Lower leg skin (tissue), 4 donors: ENCODE measurements at regions of chr1 and their contacts with region 1.

Region 1: DNA sequence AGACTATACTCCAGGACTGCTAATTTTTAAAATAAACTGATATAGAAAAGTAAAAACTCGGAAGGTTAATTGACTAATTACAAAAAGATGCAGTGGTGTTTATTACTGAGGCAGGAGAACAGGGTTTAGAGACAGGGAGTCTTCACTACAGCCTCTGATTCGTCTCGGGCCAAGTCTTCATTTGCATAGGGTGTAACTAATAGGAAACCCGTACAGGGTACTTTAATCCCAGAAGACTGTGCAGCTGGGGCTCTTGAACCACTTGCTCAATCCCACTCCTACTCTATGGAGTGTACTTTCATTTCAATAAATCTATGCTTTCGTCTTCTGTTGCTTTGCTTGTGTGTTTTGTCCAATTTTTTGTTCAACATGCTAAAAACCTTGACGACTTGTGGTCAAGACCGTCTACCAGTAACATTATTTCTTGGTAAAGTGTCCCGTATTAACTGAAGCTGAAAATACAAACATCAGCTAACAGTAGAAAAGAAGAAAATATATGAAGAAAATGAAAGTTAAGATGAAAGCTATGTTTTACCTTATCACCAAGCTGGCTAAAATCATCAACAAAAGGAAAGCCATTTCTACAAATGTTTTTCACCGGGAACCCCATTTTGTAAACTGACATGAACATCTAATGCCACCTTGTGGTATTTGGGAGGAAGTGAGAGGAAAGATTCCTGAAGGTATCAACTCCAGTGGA is 8.0 kb downstream of the SDHB start:
- DNase-seq: no peak
- H3K4me3 ChIP-seq: no peak overlapping the region
- CTCF ChIP-seq: peak in 1 of 3 donors; percentile 59
- POLR2A ChIP-seq: no peak

Region 2: DNA sequence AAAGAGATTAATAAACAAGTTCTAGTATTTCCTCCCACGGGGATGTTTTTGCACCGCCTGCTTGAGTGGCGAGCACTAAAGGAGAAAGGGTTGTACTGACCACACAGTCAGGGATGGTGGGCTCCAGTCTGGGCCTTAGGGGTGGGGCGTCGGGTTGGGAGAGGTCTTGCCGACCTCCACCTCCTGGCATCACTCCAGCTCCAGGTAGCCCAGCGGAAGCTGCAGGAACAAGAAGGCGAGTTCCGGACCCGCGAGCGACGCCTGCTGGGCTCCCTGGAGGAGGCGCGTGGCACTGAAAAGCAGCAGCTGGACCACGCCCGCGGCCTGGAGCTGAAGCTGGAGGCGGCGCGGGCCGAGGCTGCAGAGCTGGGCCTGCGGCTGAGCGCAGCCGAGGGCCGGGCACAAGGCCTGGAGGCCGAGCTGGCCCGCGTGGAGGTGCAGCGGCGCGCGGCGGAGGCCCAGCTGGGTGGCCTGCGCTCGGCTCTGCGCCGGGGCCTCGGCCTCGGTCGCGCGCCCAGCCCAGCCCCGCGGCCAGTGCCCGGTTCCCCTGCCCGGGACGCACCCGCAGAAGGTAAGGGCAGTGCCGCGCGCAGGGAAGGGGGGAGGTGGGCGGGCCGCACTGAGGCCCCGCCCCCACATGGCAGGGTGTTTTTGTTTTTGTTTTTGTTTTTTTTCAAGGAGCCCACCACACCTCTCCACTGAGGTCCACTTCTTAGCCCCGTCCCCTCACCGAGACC is 85.1 kb before region 1 on chr1:
- intact Hi-C with region 1: loop called (anchors 5 kb)
- DNase-seq: peak; percentile 69 to 96
- H3K4me3 ChIP-seq: peak overlapping the region; percentile 15
- CTCF ChIP-seq: no peak
- POLR2A ChIP-seq: no peak

Region 3: DNA sequence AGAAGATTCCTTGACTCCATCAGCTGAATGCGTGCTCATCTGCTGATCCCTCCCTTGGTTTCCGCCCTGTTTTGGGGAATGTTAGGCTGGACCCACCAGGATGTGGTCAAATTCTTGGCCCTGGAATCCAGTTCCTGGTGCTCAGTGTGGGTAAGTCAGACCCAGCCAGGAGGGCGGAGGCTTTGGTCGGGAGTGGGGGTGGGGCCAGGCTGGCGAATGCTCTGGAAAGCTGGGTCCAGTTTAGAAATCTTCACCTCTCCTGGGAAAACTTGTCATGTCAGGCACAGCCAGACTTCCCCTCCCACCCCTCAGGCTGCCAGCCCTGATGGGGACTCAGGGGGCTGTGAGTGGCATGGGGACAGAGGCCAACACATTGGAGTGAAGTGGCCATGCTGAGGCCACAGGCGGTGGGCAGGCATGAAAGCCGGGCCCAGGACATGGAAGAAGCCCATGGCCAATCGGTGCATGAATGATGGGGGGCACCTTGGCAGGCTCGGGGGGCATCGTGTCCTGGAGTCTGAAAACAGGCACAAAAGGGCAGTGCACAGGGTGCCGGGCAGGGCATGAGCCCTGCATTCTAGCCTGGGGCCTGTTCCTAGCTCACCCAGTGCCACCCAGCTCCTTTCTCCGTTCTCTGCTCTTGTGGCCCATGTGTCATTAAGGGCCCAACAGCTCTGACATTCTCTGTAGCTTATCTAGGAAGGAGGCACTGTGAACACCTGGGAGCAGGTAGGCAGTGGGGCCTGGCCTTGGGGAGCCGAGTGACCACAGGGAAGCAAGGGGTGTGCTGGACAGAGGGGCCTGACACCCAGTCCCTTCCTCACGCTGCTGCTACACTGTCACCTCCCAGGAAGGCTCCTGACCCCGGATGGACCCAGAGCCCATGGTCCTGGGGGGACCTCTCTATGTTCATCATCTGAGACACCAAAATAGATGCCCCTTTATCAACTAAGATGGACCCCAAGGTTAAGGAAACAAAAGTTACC is 144.5 kb after region 1 on chr1:
- intact Hi-C with region 1: no loop called
- DNase-seq: peak in 1 of 2 donors; percentile 83
- H3K4me3 ChIP-seq: no peak overlapping the region
- CTCF ChIP-seq: no peak
- POLR2A ChIP-seq: no peak

Region 4: GRCh38 chr1:17335821-17336710 is 290.3 kb after region 1 on chr1:
- intact Hi-C with region 1: no loop called
- DNase-seq: peak; percentile 46 to 88
- H3K4me3 ChIP-seq: no peak overlapping the region
- CTCF ChIP-seq: no peak
- POLR2A ChIP-seq: no peak